ENCODE measurements at regions of chr7 and their contacts with region 1.

Region 1: DNA sequence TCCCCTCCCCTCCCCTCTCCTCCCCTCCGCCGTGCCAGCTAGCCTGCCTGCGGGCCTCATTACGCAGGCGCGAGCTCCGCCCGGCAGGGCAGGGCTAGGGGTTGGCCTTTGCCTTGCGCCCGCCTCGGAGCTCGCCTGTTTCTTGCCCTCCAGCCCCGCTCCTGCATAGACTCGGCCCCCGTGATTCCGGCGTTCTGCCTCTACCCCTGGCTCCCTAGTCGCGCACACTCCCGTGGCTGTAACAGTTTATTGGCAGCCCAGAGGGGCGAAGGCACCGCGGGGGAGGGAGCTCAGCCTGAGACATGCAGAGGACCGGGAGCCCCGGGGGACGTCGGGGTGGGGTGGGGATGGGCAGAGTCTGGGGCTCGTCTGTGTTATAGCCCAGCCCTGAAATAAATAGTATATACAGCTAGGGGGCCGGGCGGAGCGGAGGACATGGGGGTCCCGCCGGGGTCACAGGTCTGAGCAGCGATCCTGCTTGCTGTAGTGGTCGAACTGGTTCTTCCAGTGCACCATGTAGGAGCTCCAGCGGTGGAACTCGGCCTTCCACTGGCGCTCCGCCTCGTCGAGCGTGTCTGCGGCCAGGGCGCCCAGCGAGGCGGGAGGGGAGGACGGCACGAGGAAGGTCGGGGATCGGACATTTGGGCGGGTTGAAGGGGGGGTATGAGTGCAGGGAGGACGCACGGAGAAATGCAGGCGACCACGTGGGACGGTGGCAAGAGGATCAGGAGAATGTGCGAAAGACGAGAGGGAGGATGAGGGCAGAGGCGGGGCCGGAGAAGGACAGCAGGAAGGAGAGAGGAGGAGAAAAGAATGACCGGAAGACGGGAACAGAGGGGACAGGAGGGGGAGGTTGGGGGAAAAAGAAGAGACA is 483 bp upstream of the UFSP1 start:
- DNase-seq: peak; percentile 100
- H3K4me3 ChIP-seq: peak overlapping the region; percentile 71 to 78
- H3K27ac ChIP-seq: peak overlapping the region; percentile 82 to 97
- H3K4me1 ChIP-seq: peaks cover 7 to 40% of the 10 kb centered on the region in 2 experiments
- H3K27me3 ChIP-seq: 0 out of 2 replicates have a peak, but pooled peaks cover under 1% of the 10 kb centered on the region
- CTCF ChIP-seq: no peak
- EP300 ChIP-seq: no peak
- RAD21 ChIP-seq: no peak

Region 2: DNA sequence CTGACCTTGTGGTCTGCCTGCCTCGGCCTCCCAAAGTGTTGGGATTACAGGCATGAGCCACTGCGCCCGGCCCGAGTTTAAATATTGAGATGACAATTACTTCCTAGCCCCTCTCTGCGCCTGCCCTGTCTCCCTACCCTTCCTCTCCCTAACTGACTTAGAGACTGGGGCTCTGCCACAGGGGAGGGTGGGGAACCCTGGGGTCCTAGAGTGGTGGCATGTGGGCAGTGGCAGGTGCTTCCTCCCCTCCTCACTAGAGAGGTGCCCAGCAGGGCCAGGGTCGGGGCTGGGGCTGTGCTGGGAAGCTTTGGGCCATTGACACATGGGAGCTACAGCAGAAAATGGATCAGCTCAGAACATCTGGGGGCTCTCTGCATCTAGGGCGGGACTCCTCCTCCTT is 12.6 kb after region 1 on chr7:
- CTCF ChIA-PET with region 1: interaction called, 13 read pairs
- POLR2A ChIA-PET with region 1: no interaction called
- DNase-seq: no peak
- H3K4me3 ChIP-seq: no peak overlapping the region
- H3K27ac ChIP-seq: no peak overlapping the region
- H3K4me1 ChIP-seq: no peaks in the 10 kb centered on the region; a peak in 1 of 4 replicates
- H3K27me3 ChIP-seq: peaks cover 57% of the 10 kb centered on the region
- CTCF ChIP-seq: no peak
- EP300 ChIP-seq: no peak
- RAD21 ChIP-seq: no peak

Region 3: DNA sequence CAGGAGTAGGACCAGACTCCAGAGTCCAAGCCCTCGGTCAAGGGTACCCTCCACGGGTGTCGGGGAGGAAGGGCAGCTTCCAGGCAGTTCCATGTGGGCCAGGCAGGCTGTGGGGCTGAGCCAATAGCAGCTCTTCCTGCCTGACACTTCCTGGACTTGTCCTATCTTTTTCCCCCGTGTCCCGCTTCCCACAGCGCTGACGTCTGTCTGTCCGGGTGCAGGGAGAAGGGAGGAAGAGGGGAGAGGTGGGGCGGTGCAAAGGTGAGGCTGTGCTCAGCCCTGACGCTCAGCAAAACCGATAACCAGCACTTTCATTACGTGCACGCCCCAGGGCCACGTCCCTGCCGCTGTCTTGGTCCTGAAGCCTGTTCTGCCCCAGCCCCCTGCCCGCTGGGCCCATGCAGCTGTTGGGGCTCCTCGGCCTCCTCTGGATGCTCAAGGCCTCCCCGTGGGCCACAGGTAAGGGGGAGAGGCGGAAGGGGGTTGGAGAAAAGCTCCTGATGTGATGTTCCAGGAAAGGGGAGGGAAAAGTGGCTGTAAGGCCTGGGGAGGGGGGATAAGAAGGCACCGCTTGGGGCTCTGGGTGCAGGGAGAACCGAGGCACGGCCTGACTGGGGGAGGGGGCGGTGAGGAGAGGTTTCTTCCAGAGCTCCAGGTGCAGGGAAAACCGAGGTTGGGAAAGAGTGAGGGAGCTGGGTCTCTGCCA is 59.4 kb after region 1 on chr7 and contains the start of gene MUC3A:
- CTCF ChIA-PET with region 1: interaction called, 14 read pairs
- POLR2A ChIA-PET with region 1: no interaction called
- DNase-seq: no peak
- H3K4me3 ChIP-seq: no peak within 1 kb of the TSS
- H3K27ac ChIP-seq: no peak within 1 kb of the TSS
- H3K4me1 ChIP-seq: no peaks in the 10 kb centered on the region
- H3K27me3 ChIP-seq: peaks cover 68% of the 10 kb centered on the region
- CTCF ChIP-seq: no peak
- EP300 ChIP-seq: no peak
- RAD21 ChIP-seq: no peak
- polyA plus RNA-seq, gene MUC3A: 0.03 and 0.11 TPM in 2 replicates

Region 4: DNA sequence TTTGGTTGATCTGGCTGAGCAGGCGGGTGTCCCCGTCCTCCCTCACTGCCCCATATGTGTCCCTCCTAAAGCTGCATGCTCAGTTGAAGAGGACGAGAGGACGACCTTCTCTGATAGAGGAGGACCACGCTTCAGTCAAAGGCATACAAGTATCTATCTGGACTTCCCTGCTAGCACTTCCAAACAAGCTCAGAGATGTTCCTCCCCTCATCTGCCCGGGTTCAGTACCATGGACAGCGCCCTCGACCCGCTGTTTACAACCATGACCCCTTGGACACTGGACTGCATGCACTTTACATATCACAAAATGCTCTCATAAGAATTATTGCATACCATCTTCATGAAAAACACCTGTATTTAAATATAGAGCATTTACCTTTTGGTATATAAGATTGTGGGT is 168.4 kb after region 1 on chr7:
- CTCF ChIA-PET with region 1: interaction called, 69 read pairs
- POLR2A ChIA-PET with region 1: no interaction called
- DNase-seq: no peak
- H3K4me3 ChIP-seq: no peak overlapping the region
- H3K27ac ChIP-seq: no peak overlapping the region
- H3K4me1 ChIP-seq: no peaks in the 10 kb centered on the region
- H3K27me3 ChIP-seq: peaks cover 87% of the 10 kb centered on the region
- CTCF ChIP-seq: no peak
- EP300 ChIP-seq: no peak
- RAD21 ChIP-seq: no peak

Region 5: DNA sequence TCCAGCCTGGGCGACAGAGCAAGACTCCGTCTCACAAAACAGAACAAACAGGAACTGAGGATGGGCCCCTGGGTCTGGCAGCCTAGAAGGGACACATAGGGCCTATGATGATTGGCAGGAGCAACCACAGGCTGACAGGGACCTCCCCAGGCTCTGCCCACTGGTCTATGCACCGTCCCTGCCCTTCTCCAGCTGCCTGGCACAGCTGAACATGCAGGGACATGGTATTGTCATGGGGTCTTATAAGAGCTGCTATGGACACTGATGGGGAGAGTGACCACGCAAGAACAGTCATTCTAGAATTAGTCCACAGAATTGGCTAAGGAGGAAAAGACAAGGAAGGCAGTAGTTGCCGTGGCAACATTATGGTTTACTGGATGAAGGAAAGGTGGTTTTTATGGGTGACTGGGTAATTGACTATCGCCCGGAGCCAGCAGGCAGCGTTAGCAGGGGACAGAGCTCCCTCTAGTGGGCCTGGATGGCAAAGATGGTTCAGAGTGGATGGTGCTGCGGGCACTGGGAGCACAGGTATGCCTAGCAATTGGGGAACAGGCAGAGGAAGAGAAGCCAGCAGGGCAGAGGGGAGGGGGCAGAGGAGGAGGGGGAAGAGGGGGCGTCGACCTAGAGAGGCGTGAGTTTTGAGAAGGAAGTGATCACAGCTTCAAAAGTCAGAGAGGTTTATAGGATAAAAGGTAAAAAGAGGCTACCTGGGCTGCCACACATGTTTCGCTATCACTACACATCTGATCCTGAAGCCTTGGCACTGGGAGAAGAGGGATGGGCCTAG is 187.5 kb after region 1 on chr7:
- CTCF ChIA-PET with region 1: interaction called, 46 read pairs
- POLR2A ChIA-PET with region 1: no interaction called
- DNase-seq: peak; percentile 88
- H3K4me3 ChIP-seq: no peak overlapping the region
- H3K27ac ChIP-seq: no peak overlapping the region
- H3K4me1 ChIP-seq: no peaks in the 10 kb centered on the region
- H3K27me3 ChIP-seq: peaks cover 14% of the 10 kb centered on the region; the same call in 1 of the 2 replicates
- CTCF ChIP-seq: peak; percentile 99
- EP300 ChIP-seq: no peak
- RAD21 ChIP-seq: peak; percentile 88

Measured in SK-N-SH (cell line).